Heart left ventricle (tissue), 16 donors: ENCODE measurements at regions of chr9 and their contacts with region 1.

Region 1: DNA sequence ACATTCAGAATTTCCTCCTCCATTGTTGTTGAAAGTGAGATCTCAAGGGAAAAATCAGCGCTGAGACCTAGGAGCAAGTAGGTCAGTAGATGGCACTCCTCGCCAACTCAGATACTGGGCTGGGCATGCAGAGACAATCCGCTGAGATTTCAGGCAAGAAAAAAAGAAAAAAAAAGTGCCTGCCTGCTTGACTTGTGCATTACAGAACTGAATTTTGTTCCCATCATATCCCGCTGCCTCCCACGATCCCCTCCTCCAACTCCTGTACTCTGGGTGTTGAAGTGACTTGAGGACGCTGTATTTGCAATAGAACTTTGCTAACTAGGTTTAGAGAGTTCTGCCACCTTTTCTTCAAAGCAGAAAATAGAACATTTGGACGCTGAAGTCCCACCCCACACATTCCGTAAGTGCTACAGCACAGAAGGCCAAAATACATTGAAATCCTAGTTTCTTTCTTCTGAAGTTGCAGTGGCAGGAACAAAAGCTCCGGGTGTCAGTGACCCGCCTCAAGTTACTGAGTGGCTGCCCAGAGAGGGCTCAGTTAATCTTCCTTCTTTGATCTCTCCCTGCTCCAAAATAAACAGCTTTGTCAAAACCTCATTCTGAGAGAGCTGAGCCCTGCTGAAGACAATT is 265.8 kb downstream of the MLLT3 start:
- DNase-seq: peak; percentile 58 to 70 (median 68)
- ATAC-seq: peak; percentile 76 to 95 (median 94)
- H3K4me3 ChIP-seq: peak overlapping the region in 8 of 12 donors; percentile 1 to 32 (median 28)
- H3K27ac ChIP-seq: peak overlapping the region in 10 of 12 donors; percentile 20 to 58 (median 43)
- H3K4me1 ChIP-seq: peaks cover 0 to 25% (median 15%) of the 10 kb centered on the region in 12 donors
- H3K27me3 ChIP-seq: no peaks in the 10 kb centered on the region
- CTCF ChIP-seq: peak; percentile 56 to 82 (median 73)
- POLR2A ChIP-seq: no peak

Region 2: DNA sequence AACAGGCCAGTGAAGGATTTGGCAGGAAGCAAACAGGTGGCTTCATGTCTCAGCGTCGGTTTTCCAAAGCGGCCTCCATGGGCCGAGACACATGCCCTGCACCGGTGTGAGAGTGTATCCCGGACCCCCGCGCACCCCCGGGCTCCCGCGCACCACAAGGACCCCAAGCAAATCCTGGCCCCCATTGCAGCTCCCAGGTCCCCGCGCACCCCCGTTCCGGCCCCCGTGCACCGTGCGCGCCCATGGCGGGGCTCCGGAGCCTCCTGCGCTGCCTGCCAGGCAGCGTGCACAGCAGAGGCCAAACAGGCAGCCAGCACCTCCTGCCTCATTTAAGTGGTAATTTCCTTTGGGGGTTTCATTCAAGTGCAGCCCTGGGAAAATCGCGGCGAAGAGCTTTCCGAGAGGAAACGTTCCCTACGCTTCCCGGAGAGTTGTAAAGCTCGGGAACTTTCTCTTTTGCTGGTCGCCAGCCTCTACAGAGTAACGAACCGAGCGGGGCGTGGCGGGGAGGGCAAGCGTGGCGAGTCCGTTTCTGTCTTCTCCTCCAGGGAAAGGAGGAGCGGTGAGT is 422.1 kb before region 1 on chr9:
- intact Hi-C with region 1: loop called in 8 of 10 experiments (anchors 5 to 10 kb)
- DNase-seq: peak; percentile 31 to 60 (median 33)
- ATAC-seq: peak in 3 of 4 donors; percentile 66 to 81 (median 69)
- H3K4me3 ChIP-seq: peak overlapping the region; percentile 22 to 70 (median 57)
- H3K27ac ChIP-seq: peak overlapping the region in 1 of 12 donors; percentile 46
- H3K4me1 ChIP-seq: peaks cover 0 to 9% (median 0%) of the 10 kb centered on the region in 12 donors
- H3K27me3 ChIP-seq: no peaks in the 10 kb centered on the region
- CTCF ChIP-seq: peak in 1 of 12 donors; percentile 21
- POLR2A ChIP-seq: no peak

Region 3: GRCh38 chr9:20028849-20029231 is 327.7 kb before region 1 on chr9:
- intact Hi-C with region 1: loop called in 2 of 10 experiments (anchors 5 to 10 kb)
- DNase-seq: peak in 2 of 5 donors; percentile 14 to 22
- ATAC-seq: peak; percentile 57 to 79 (median 70)
- H3K4me3 ChIP-seq: no peak overlapping the region
- H3K27ac ChIP-seq: peak overlapping the region in 10 of 12 donors; percentile 4 to 89 (median 40)
- H3K4me1 ChIP-seq: peaks cover 0 to 26% (median 5%) of the 10 kb centered on the region in 12 donors
- H3K27me3 ChIP-seq: no peaks in the 10 kb centered on the region
- CTCF ChIP-seq: no peak
- POLR2A ChIP-seq: no peak

Region 4: GRCh38 chr9:20289423-20290010 is 67.0 kb before region 1 on chr9:
- intact Hi-C with region 1: loop called in 1 of 10 experiments (anchors 10 kb)
- DNase-seq: no peak
- ATAC-seq: no peak
- H3K4me3 ChIP-seq: no peak overlapping the region
- H3K27ac ChIP-seq: no peak overlapping the region
- H3K4me1 ChIP-seq: peaks cover 0 to 13% (median 0%) of the 10 kb centered on the region in 12 donors
- H3K27me3 ChIP-seq: no peaks in the 10 kb centered on the region
- CTCF ChIP-seq: no peak
- POLR2A ChIP-seq: no peak

Region 5: DNA sequence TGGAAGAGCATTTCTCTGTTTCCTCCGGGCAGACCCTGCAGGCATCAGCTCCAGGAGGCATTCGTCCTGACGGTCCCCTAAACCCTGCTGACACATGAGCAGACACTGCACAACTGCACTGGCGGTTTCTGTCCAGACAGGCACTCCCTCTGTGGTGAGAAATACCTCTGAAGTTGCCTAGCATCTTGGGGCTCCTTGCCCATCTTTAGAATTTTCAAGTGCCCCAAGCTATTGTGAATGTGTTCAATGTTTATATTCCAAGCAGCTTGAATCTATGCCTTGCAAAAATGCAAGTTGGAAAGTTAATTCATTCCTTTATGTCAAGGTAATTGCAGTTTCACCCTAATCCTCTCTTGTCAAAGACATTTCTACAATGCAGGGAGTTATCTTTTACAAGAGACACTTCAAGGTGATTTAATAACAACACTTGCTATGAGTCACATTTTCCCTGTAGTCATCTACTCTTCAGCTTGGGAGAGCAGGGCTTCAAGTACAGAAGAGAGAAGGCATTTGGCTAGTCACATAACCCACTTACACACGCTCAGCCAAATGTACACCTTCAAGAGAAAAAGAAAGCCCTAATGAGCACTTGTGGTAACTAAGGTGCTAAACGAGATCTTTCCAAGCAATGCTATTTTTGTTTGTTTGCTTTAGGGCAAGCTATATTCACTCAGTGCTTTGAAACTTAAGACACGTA is 36.7 kb before region 1 on chr9:
- intact Hi-C with region 1: no loop called
- DNase-seq: no peak
- ATAC-seq: peak in 2 of 4 donors; percentile 65 to 83
- H3K4me3 ChIP-seq: no peak overlapping the region
- H3K27ac ChIP-seq: peak overlapping the region in 1 of 12 donors; percentile 61
- H3K4me1 ChIP-seq: peaks cover 0 to 19% (median 0%) of the 10 kb centered on the region in 12 donors
- H3K27me3 ChIP-seq: no peaks in the 10 kb centered on the region
- CTCF ChIP-seq: no peak
- POLR2A ChIP-seq: no peak

Region 6: DNA sequence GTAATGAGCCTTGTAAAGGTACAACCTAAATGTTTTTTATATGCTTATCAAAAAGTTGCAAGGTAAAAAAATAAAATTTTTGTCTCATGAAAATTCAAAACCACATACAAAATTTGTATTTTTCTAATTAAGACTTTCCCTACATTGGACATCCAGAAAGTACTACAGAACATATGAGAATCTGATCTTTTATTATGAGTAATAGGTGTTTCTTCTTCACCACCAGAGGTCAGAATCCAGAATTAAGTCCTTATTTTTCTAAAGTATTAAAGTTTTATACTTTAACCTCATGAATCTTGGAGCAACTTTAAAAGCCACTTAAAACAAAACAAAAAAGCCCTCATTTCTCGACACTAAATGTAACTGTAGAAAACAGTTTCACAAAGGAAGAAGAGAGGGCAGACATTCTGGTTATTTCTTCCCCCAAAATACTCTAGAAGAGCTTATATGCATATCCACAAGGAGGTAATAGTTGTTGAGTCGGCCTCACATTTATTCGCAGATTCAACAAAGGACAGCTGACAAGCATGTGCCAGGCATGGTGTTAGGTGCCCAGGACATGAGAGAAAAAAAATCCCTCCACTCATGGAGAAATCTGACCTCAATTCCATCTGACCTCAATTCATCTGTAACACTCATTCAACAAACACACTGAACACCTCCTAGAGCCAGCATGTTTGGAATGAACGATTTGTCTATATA is 196.5 kb after region 1 on chr9:
- intact Hi-C with region 1: loop called in 1 of 10 experiments (anchors 5 kb)
- DNase-seq: no peak
- ATAC-seq: peak in 1 of 4 donors; percentile 42
- H3K4me3 ChIP-seq: no peak overlapping the region
- H3K27ac ChIP-seq: no peak overlapping the region
- H3K4me1 ChIP-seq: peaks cover 0 to 57% (median 22%) of the 10 kb centered on the region in 12 donors
- H3K27me3 ChIP-seq: no peaks in the 10 kb centered on the region
- CTCF ChIP-seq: peak in 9 of 12 donors; percentile 13 to 47 (median 22)
- POLR2A ChIP-seq: no peak

Region 7: GRCh38 chr9:20684035-20684872 is 327.7 kb after region 1 on chr9 and contains the start of gene FOCAD:
- intact Hi-C with region 1: loop called in 1 of 10 experiments (anchors 10 kb)
- DNase-seq: peak; percentile 96 to 98 (median 97)
- ATAC-seq: peak; percentile 98 to 100 (median 99)
- H3K4me3 ChIP-seq: peak within 1 kb of the TSS; percentile 80 to 95 (median 88)
- H3K27ac ChIP-seq: peak within 1 kb of the TSS; percentile 87 to 97 (median 94)
- H3K4me1 ChIP-seq: peaks cover 0 to 38% (median 22%) of the 10 kb centered on the region in 12 donors
- H3K27me3 ChIP-seq: no peaks in the 10 kb centered on the region
- CTCF ChIP-seq: peak in 3 of 12 donors; percentile 4 to 9 (median 5)
- POLR2A ChIP-seq: peak; percentile 92 to 99
- total RNA-seq, gene FOCAD: 25.1 to 39.5 (median 32.6) TPM

Region 8: GRCh38 chr9:20941174-20941690 is 584.7 kb after region 1 on chr9:
- intact Hi-C with region 1: loop called (anchors 2 to 5 kb)
- DNase-seq: peak in 3 of 5 donors; percentile 30 to 37 (median 34)
- ATAC-seq: peak; percentile 82 to 93 (median 88)
- H3K4me3 ChIP-seq: no peak overlapping the region
- H3K27ac ChIP-seq: no peak overlapping the region
- H3K4me1 ChIP-seq: peaks cover 0 to 6% (median 0%) of the 10 kb centered on the region in 12 donors
- H3K27me3 ChIP-seq: no peaks in the 10 kb centered on the region
- CTCF ChIP-seq: peak; percentile 76 to 94 (median 86)
- POLR2A ChIP-seq: no peak